ENCODE measurements at regions of chr6 and their contacts with region 1.

Region 1: GRCh38 chr6:6826095-6826901 is 237.8 kb downstream of the LY86 start:
- DNase-seq: peak; percentile 91
- H3K4me3 ChIP-seq: no peak overlapping the region
- H3K27ac ChIP-seq: peak overlapping the region; percentile 48
- H3K4me1 ChIP-seq: peaks cover 16% of the 10 kb centered on the region
- H3K27me3 ChIP-seq: peaks cover 0 to 2% of the 10 kb centered on the region in 2 experiments
- CTCF ChIP-seq: no peak
- POLR2A ChIP-seq: no peak

Region 2: DNA sequence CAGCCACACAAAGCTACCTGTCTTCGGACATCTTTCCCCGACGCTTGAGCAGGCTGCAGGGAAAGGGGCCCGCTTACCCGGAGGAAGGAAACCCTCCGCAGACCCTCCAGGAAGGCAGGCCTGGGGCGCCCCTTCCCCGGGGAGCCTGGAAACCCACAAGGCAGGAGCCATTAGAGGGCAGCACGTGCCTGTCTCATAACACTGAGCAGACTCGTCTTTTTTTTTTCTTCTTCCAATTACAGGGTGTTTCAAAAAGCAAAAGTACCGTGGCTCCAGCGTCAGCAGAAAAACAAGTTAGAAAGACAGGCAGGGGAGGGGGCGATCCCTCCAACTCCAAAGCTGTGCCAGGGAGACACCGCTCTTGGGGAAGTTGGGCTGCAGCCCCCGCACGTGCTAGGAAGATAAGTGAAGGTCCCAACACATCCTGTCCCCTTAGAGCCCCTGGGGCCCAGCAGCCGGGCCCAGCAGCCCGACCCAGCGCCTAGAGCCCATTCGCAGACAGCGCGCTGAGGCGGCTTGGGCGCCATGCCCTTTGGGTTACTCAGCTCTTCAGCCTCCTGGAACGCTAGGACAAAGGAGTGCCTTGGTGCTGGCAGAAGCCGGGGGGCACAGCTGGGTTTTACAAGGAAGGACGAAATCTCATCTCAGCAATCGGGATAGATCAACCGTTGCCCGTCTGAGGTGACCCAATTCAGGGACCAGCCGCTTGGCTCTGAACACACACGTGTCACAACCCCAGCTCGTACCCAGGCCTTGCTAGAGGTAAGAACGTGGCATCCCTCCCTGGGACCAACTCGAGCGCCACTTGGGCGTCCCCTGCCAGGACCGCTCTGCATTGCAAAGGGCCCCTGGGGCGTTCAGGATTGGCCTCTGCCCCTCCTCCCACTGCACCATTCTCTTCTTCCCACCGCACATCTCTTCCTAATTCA is 101.5 kb before region 1 on chr6:
- CTCF ChIA-PET with region 1: interaction called, 10 read pairs
- POLR2A ChIA-PET with region 1: no interaction called
- dilution Hi-C with region 1: no loop called
- intact Hi-C with region 1: no loop called
- DNase-seq: peak; percentile 83
- H3K4me3 ChIP-seq: peak overlapping the region in 1 of 3 experiments; percentile 16
- H3K27ac ChIP-seq: peak overlapping the region; percentile 59
- H3K4me1 ChIP-seq: peaks cover 19% of the 10 kb centered on the region
- H3K27me3 ChIP-seq: peaks cover 0 to 2% of the 10 kb centered on the region in 2 experiments
- CTCF ChIP-seq: peak; percentile 57 to 60
- POLR2A ChIP-seq: no peak

Region 3: GRCh38 chr6:6758915-6759654 is 67.2 kb before region 1 on chr6:
- CTCF ChIA-PET with region 1: interaction called, 13 read pairs
- POLR2A ChIA-PET with region 1: no interaction called
- dilution Hi-C with region 1: no loop called
- intact Hi-C with region 1: no loop called
- DNase-seq: peak; percentile 64
- H3K4me3 ChIP-seq: no peak overlapping the region
- H3K27ac ChIP-seq: no peak overlapping the region
- H3K4me1 ChIP-seq: no peaks in the 10 kb centered on the region
- H3K27me3 ChIP-seq: peaks cover 0 to 4% of the 10 kb centered on the region in 2 experiments
- CTCF ChIP-seq: peak; percentile 40 to 45
- POLR2A ChIP-seq: no peak

Region 4: DNA sequence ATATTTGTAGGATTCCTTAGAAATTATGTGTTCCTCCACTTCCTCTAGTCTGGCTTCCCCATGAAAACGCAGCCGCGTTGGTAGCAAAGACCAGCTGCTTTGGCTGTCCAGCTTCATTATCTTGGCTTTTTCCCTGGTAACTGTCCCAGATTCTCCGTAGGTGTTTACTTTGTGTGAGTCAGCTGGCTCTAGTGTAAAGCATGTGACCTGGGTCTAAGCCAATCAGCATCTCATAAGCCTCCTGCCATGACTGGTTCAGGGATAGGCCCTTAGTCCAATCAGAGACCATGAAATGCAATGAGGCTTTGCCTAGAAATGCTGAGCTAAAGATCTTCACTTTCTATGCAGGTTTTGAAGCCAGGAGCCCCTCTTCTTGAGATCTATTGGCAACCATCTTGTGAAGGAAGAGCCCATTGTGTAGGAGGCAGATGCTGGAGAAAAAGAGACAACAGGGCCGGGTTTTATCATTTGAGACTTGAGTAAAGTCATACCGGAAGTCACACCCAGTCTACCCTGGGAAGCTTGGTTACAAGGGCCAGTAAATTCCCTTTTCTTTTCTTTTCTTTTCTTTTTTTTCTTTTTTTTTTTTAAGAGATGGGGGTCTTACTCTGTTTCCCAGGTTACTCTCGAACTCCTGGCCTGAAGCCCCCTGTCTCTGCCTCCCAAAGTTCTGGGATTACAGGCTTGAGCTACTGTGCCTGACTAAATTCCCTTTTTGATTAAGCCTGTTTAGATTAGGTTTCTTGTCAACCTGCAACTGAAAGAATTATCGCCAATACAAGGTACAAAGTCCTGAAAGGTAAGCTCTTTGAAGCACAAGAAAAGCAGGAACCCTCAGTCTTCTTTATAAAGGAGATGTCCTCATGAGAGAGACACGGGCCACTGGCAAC is 25.0 kb after region 1 on chr6:
- CTCF ChIA-PET with region 1: interaction called, 6 read pairs
- POLR2A ChIA-PET with region 1: no interaction called
- dilution Hi-C with region 1: no loop called
- intact Hi-C with region 1: loop called (anchors 1 kb)
- DNase-seq: peak; percentile 92
- H3K4me3 ChIP-seq: no peak overlapping the region
- H3K27ac ChIP-seq: no peak overlapping the region
- H3K4me1 ChIP-seq: no peaks in the 10 kb centered on the region
- H3K27me3 ChIP-seq: no peaks in the 10 kb centered on the region
- CTCF ChIP-seq: no peak
- POLR2A ChIP-seq: no peak

Region 5: GRCh38 chr6:6872459-6873356 is 46.4 kb after region 1 on chr6:
- CTCF ChIA-PET with region 1: no interaction called
- POLR2A ChIA-PET with region 1: no interaction called
- dilution Hi-C with region 1: no loop called
- intact Hi-C with region 1: no loop called
- DNase-seq: no peak
- H3K4me3 ChIP-seq: no peak overlapping the region
- H3K27ac ChIP-seq: no peak overlapping the region
- H3K4me1 ChIP-seq: no peaks in the 10 kb centered on the region
- H3K27me3 ChIP-seq: no peaks in the 10 kb centered on the region
- CTCF ChIP-seq: no peak
- POLR2A ChIP-seq: no peak